Endothelial cell of umbilical vein (primary cell): ENCODE measurements at regions of chr5 and their contacts with region 1.

Region 1: GRCh38 chr5:135072387-135073281 is 38.6 kb upstream of the PITX1 start:
- DNase-seq: no peak
- H3K4me3 ChIP-seq: no peak overlapping the region
- H3K27ac ChIP-seq: no peak overlapping the region
- H3K4me1 ChIP-seq: no peaks in the 10 kb centered on the region
- H3K27me3 ChIP-seq: peaks cover 0 to 2% of the 10 kb centered on the region in 2 experiments
- CTCF ChIP-seq: no peak
- POLR2A ChIP-seq: no peak

Region 2: GRCh38 chr5:135174315-135175096 is 101.9 kb after region 1 on chr5:
- CTCF ChIA-PET with region 1: no interaction called
- POLR2A ChIA-PET with region 1: no interaction called
- dilution Hi-C with region 1: no loop called
- intact Hi-C with region 1: loop called (anchors 5 kb)
- DNase-seq: no peak
- H3K4me3 ChIP-seq: no peak overlapping the region
- H3K27ac ChIP-seq: no peak overlapping the region
- H3K4me1 ChIP-seq: no peaks in the 10 kb centered on the region
- H3K27me3 ChIP-seq: peaks cover 10 to 20% of the 10 kb centered on the region in 2 experiments
- CTCF ChIP-seq: no peak
- POLR2A ChIP-seq: no peak